BJ (cell line): ENCODE measurements at regions of chr19 and their contacts with region 1.

Region 1: DNA sequence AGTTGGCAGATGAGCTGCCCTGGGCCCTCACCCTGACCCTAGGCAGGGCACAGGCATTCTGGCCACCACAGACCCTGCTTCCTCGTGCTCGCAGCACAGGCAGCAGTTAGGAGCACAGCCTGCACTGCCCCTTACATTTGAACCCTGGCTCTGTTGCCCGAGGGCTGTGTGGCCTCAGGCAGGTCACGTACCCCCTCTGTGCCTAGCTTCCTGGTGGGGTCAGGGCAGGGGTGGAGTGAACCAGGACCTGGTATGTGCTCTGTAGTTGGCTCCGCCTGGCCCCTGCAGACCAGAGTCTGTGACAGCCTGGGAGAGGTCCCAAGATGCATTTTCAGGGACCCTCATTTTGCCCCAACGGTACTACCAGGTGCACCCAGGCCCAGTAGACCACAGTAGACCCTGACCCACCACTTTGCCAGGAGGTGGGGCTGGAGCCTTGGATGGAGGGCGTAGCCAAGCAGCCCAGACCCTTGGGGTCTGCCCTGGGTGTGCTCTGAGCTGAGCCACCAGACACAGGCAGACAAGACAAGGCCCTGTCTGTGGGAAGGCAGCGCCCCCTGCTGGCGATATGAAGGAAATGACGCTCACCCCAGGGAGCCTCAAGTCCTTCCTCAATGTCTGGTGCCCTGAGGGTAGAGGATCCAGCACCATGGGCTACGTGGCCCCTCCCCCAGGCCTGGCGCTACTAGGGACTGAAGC is 9.1 kb downstream of the LYL1 start:
- DNase-seq: no peak
- H3K4me3 ChIP-seq: no peak overlapping the region
- H3K27me3 ChIP-seq: no peaks in the 10 kb centered on the region
- CTCF ChIP-seq: peak; percentile 90

Region 2: DNA sequence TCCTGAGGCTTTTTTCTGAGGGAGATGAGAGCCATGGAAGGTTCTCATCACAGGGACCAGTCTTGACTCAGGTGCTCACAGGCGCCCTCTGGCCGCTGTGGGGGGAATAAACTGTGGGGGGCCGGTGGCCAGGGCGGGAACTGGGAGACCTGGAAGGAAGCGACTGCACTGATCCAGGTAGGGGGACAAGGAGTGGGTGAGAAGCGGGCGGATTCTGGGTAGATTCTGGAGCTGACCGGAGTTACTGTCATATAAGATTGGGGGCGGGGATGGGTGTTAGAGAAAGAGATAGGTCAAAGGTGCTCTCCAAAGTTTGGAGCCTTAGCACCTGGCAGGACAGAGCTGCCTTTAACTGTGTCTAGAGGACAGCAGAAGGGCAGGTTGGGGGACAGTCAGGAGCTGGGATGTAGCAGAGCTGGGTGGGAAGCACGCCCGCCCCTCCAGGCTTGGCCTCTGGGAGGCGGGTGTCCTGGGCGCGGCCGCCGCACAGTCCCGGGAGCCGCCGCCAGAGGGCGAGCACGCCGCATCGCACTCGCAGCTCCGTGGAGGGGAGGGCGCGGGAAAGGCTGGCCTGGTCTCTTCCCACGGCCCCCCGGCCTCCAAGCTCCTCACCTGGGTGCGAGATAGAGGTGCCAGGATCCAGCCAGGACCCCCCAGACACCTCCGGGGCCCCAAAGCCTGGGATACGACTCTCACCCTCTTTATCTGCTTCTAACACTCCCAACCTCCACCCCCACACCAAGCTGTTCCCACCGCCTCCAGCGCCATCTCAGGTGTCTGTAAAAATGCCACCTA is 128.3 kb before region 1 on chr19:
- CTCF ChIA-PET with region 1: interaction called, 20 read pairs
- POLR2A ChIA-PET with region 1: no interaction called
- DNase-seq: no peak
- H3K4me3 ChIP-seq: peak overlapping the region; percentile 38
- H3K27me3 ChIP-seq: no peaks in the 10 kb centered on the region
- CTCF ChIP-seq: peak; percentile 84

Region 3: GRCh38 chr19:12983542-12984142 is 109.9 kb before region 1 on chr19:
- CTCF ChIA-PET with region 1: interaction called, 139 read pairs
- POLR2A ChIA-PET with region 1: no interaction called
- DNase-seq: no peak
- H3K4me3 ChIP-seq: peak overlapping the region; percentile 39
- H3K27me3 ChIP-seq: no peaks in the 10 kb centered on the region
- CTCF ChIP-seq: peak; percentile 71

Region 4: GRCh38 chr19:13033819-13034611 is 59.5 kb before region 1 on chr19:
- CTCF ChIA-PET with region 1: interaction called, 95 read pairs
- POLR2A ChIA-PET with region 1: no interaction called
- DNase-seq: no peak
- H3K4me3 ChIP-seq: no peak overlapping the region
- H3K27me3 ChIP-seq: no peaks in the 10 kb centered on the region
- CTCF ChIP-seq: peak; percentile 84

Region 5: GRCh38 chr19:13051267-13052165 is 42.0 kb before region 1 on chr19:
- CTCF ChIA-PET with region 1: interaction called, 91 read pairs
- POLR2A ChIA-PET with region 1: interaction called, 3 read pairs
- DNase-seq: no peak
- H3K4me3 ChIP-seq: no peak overlapping the region
- H3K27me3 ChIP-seq: no peaks in the 10 kb centered on the region
- CTCF ChIP-seq: no peak

Region 6: DNA sequence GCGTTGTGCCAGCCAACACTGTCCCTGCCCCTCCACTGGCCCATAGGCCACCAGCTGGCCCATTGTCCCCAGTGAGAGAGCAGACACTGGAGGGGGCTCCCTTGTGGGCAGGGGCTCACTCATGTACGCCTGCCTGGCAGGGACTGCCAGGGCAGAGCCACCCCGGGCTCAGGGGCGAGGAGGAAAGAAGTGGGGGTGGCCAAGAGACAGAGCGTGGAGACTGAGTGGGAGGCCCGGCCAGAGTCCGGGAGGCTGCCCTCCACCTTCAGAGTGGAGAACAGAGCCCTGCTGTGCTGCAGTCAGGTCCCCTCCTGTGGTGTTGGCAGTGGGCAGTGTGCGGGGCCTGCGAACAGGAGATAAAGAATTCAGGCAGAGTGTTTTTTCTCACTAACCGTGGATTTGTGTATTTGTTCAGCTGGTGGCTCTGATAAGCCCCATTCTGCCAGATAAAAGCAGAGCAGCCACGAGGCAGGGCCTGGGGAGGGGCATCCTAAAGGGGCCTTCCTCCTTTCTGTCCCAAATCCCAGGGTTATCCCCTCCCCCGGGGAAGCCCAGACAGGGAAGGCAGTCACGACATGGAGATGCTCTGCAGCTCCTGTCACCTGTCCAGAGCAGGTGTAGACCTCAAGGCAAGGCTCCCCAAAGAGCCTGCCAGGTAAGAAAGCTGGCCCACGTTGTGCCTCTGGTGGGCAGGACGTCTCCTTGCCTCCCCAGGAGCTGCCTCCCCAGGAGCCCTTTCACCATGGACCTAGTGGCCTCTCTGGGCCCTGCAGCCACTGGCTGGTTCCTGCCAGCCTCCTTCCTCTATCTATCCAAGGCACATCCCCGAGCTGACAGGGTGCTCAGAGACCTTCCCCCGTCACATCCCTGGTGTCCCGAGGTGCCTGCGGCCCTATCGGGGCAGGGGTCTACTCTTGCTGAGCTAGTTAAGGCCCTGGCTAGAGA is 23.9 kb before region 1 on chr19:
- CTCF ChIA-PET with region 1: interaction called, 18 read pairs
- POLR2A ChIA-PET with region 1: interaction called, 6 read pairs
- DNase-seq: no peak
- H3K4me3 ChIP-seq: no peak overlapping the region
- H3K27me3 ChIP-seq: no peaks in the 10 kb centered on the region
- CTCF ChIP-seq: 0 out of 2 replicates have a peak, but pooled peaks have one; percentile 1

Region 7: DNA sequence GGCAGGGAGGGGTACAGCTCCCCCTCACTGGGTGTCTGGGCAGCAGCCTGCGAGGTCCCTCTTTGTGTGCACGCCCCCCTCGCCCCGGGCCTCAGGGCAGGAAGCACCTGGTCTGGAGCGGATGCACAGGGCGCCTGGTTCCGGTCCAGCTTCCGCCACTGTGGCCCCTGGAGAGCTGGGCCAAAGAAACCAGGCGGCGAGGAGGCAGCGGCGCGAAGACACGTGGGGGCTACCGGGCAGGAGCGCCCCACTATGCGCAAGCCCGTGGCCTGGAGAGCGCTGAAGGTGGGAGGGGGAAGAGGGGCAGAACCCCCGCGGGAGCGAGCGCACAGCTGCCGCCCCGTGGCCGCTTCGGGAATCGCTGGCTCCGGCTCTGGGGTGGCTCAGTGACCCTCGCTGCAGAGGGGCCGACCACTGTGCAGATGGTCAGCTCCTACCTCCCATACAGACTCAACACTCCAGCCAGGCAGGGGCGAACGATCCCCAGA is 10.8 kb after region 1 on chr19:
- CTCF ChIA-PET with region 1: interaction called, 21 read pairs
- POLR2A ChIA-PET with region 1: no interaction called
- DNase-seq: no peak
- H3K4me3 ChIP-seq: no peak overlapping the region
- H3K27me3 ChIP-seq: no peaks in the 10 kb centered on the region
- CTCF ChIP-seq: peak; percentile 74